Ovary (tissue), 10 donors: ENCODE measurements at regions of chr3 and their contacts with region 1.

Region 1: GRCh38 chr3:125072301-125072700 is 16.5 kb upstream of the HEG1 start:
- DNase-seq: no peak
- H3K4me3 ChIP-seq: no peak overlapping the region
- H3K27ac ChIP-seq: no peak overlapping the region
- H3K4me1 ChIP-seq: no peaks in the 10 kb centered on the region
- H3K27me3 ChIP-seq: no peaks in the 10 kb centered on the region
- CTCF ChIP-seq: no peak
- EP300 ChIP-seq: no peak
- POLR2A ChIP-seq: no peak

Region 2: DNA sequence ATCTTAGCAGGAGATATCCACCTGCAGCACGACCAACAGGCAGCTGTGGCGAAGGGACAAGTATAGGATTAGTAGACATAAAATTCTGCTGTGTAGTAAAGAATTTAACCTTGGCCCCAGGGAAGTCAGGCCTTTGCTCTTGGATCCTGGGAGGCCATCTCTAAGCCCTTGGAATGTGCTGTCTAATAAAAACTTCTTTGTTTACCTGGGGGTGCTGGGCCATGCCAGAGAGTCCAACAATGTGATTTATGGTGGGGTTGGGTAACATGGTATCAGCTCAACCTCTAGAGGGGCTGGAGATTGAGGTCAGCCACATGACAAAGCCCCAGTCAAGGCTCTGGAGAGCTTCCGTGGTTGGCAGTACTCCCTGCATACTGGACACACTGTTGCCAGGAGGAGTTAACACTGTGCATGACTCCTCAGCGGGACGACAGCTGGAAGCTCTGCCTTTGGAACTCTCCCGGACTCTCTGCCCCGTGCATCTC is 68.9 kb before region 1 on chr3:
- intact Hi-C with region 1: loop called in 1 of 4 experiments (anchors 10 kb)
- DNase-seq: peak; percentile 50 to 70 (median 52)
- H3K4me3 ChIP-seq: no peak overlapping the region
- H3K27ac ChIP-seq: no peak overlapping the region
- H3K4me1 ChIP-seq: peaks cover 6% of the 10 kb centered on the region
- H3K27me3 ChIP-seq: no peaks in the 10 kb centered on the region
- CTCF ChIP-seq: no peak
- EP300 ChIP-seq: no peak
- POLR2A ChIP-seq: no peak